ENCODE measurements at regions of chr19 and their contacts with region 1.

Region 1: DNA sequence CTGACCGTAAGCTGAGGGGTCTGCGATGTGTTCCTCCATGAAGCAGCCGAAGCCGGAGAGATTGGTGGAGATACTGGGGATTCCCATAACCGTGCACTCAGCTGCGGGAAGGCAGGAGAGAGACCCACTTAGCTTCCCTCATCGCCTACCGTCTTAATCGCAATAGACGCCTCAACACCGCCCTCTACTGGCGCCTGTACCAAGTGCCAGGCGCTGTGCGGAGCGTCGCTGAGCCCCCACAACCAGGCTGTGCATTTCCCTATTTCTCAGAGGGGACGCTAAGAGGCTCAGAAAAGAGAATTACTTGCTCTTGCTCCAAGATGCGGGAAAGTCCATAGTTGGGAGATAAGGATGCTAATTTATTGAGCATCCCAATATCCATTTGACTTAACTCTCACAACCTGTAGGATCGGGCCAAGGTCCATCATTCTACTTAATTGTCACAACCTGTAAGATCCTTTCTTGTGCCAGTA is 5.8 kb downstream of the FTL start:
- DNase-seq: peak; percentile 72
- H3K4me3 Mint-ChIP-seq: no peak overlapping the region
- H3K27ac Mint-ChIP-seq: peak overlapping the region; percentile 41
- H3K4me1 Mint-ChIP-seq: peaks cover 25% of the 10 kb centered on the region
- H3K27me3 Mint-ChIP-seq: no peaks in the 10 kb centered on the region

Region 2: GRCh38 chr19:48842789-48843162 is 128.2 kb before region 1 on chr19:
- intact Hi-C with region 1: loop called (anchors 1 kb)
- DNase-seq: peak; percentile 22
- H3K4me3 Mint-ChIP-seq: no peak overlapping the region
- H3K27ac Mint-ChIP-seq: no peak overlapping the region
- H3K4me1 Mint-ChIP-seq: no peaks in the 10 kb centered on the region
- H3K27me3 Mint-ChIP-seq: peaks cover under 1% of the 10 kb centered on the region

Region 3: DNA sequence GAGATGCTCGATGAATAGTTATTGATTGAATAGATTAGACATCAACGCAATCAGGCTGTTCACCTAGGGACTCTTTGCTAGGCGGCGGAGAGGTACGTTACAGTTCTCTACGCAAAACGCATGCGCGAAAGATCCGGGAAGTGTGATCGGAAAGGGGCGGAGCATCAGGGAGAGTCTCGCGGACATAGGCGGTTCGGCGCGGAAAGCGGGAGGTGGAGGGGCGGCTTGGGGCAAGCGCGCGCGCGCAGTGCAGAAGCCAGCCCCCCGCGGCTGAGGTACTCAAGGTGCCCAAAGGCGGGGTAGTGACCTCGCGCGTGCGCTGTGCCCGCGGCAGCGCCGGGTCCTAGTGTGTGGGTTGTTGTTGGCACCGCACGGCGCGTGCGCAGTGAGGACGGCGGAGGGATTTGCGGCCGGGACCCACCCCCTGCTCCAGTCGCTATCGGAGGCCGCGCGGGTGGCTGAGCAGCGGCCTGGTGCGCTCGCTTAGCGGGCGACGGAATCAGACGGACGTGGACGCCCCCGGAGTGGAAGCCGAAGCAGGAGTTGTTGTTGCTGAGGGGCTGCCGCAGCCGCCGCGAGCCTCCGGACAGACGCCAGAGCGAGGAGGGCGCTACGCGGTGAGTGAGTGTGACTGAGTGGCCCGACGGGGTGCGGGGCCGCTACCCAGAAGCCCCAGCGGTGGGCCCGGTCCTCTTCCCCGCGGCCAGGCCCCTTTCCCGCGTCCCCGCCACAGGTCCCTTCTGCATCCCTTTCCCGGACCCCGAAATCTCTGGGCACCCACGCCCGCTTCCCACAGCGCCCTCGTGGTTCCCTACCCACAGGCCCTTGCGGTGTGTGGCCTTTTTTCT is 114.3 kb after region 1 on chr19 and contains the start of gene SNRNP70:
- intact Hi-C with region 1: no loop called
- DNase-seq: peak; percentile 99
- H3K4me3 Mint-ChIP-seq: peak within 1 kb of the TSS; percentile 99
- H3K27ac Mint-ChIP-seq: peak within 1 kb of the TSS; percentile 80
- H3K4me1 Mint-ChIP-seq: peaks cover 25% of the 10 kb centered on the region
- H3K27me3 Mint-ChIP-seq: peaks cover 2% of the 10 kb centered on the region
- total RNA-seq, gene SNRNP70: 259 and 272 TPM in 2 replicates

Measured in activated T-helper 1 cell treated with anti-CD3 and anti-CD28 coated beads, Interleukin-12 subunit alpha, Interleukin-12 subunit beta, Interleukin-2, Interleukin-4 antibody, amounts not matched to agents 30 ng/mL and 10 ng/mL and 1 ng/mL, durations not matched to agents 14 hours and 24 hours and 36 hours (primary cell).